AG04449 (cell line): ENCODE measurements at regions of chr3 and their contacts with region 1.

Region 1: GRCh38 chr3:195271116-195271858 is at the start of gene XXYLT1:
- DNase-seq: no peak
- H3K4me3 ChIP-seq: peak within 1 kb of the TSS; percentile 73
- CTCF ChIP-seq: peak; percentile 99

Region 2: DNA sequence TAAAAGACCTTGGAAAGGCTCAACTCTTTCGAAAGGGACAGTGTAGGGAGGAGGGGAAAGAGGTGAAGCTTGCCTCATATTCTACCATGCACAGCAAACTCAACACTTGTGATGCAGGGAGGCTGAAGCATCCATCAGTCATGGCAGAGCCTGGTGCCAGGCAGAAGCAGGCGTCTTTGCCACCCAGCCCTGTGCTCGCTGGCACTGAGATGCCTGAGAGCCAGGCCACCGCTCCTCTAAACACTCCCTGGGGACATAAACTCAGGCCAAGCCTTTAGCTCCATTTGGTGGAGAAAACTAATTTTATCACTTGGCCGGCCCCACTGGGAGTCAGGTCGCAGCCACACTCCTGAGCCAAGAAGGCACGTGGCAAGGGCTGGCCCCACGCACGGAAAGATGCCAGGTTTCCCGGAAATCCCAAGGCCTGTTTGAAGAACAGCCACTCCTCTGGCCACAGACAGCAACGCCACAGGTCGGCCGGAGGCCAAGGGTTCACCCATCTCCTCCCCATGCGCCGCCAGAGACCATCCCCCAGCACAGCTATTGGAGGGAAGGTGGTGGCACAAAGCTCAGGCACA is 31.0 kb before region 1 on chr3:
- CTCF ChIA-PET with region 1: interaction called, 11 read pairs
- POLR2A ChIA-PET with region 1: no interaction called
- DNase-seq: no peak
- H3K4me3 ChIP-seq: no peak overlapping the region
- CTCF ChIP-seq: no peak

Region 3: GRCh38 chr3:195286115-195286872 is 15.0 kb after region 1 on chr3:
- CTCF ChIA-PET with region 1: interaction called, 102 read pairs
- POLR2A ChIA-PET with region 1: no interaction called
- DNase-seq: no peak
- H3K4me3 ChIP-seq: no peak overlapping the region
- CTCF ChIP-seq: no peak

Region 4: DNA sequence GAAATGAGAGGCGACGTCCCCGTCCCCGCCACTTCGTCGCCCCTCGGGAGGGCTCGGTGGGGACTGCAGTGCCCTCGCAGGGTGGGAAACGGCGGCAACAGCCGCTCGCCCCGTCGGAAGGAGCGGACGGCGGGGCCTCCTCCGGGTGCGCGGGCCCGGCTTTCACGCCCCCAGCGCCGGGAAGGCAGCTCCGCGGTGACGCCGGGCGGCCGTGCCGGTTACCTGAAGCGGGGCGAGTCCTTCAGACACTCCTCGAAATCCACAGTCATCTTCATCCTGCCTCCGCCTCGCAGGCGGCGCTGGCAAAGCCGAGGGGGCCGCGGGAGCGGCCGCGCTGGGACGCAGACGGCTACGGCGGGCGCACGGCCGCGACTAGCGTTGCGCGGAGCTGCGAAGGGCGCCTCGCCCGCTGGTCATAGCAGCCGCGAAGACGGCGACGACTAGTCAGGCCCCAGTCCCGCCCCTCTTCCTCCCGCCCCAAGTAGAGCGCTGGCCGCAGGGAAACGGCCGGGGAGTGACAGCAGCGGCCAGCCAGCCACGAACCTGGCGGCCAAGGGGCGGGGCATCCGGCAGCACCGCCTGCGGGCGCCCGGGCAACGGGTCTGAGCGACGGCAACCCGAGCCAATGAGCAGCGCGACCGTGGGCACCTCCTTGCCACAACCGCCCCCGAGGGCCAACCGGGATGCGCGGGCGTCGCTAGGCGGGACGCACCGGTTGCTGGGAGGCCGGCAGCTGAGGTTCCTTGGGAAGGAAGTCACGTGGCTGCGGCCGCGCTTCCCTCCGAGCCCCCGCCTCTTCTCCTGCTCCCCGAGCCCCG is 171.5 kb after region 1 on chr3 and contains the start of gene ACAP2:
- CTCF ChIA-PET with region 1: interaction called, 17 read pairs
- POLR2A ChIA-PET with region 1: interaction called, 3 read pairs
- DNase-seq: peak; percentile 92
- H3K4me3 ChIP-seq: peak within 1 kb of the TSS; percentile 87
- CTCF ChIP-seq: no peak

Region 5: GRCh38 chr3:195522254-195523023 is 251.2 kb after region 1 on chr3:
- CTCF ChIA-PET with region 1: interaction called, 492 read pairs
- POLR2A ChIA-PET with region 1: no interaction called
- DNase-seq: no peak
- H3K4me3 ChIP-seq: no peak overlapping the region
- CTCF ChIP-seq: peak; percentile 4

Region 6: DNA sequence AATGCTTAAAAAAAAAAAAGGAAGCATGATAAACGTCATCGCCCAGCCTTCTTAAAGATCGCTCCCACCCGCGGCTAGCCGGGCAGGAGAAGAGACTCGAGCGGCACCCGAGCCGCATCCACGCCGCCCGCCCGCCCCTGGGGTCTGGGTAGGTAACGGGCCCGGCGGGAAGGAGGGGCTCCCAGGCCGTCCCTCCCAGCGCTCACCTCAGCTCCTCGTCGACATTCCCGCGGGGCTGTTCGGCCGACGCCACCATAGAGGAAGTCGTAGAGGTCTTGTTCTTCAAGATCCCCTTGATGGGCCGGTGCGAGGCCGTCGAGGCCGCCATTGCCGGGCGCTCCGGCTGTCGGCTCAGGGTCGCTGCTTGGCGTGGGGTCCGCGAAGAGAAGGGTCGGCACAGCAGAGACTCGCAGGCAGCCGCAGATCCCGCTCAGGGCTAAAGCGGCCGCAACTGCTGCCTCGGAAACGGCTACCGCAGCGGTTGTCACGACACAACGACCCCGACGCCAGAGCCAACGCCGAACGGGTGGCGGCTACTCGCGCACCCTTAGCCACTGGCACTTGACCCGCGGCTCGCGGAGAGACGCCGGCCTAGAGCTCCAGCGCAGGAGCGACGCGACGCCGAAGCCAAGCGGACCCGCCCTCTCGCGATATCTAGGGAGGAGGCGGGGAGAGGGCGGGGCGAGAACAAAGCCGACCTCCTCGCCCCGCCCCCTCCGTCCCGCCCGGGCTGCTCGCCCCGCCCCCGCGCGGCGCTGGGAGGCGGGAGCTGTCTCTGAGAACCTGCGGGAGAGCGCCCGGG is 271.6 kb after region 1 on chr3 and contains the start of gene PPP1R2:
- CTCF ChIA-PET with region 1: interaction called, 42 read pairs
- POLR2A ChIA-PET with region 1: no interaction called
- DNase-seq: peak; percentile 31
- H3K4me3 ChIP-seq: peak within 1 kb of the TSS; percentile 94
- CTCF ChIP-seq: no peak